Right cardiac atrium (tissue), 5 donors: ENCODE measurements at regions of chr4 and their contacts with region 1.

Region 1: GRCh38 chr4:73776321-73776729 is 36.0 kb downstream of the CXCL8 start:
- DNase-seq: peak in 2 of 3 donors; percentile 19 to 49
- ATAC-seq: peak; percentile 85
- H3K4me3 ChIP-seq: no peak overlapping the region
- H3K27ac ChIP-seq: no peak overlapping the region
- H3K4me1 ChIP-seq: no peaks in the 10 kb centered on the region
- H3K27me3 ChIP-seq: no peaks in the 10 kb centered on the region

Region 2: DNA sequence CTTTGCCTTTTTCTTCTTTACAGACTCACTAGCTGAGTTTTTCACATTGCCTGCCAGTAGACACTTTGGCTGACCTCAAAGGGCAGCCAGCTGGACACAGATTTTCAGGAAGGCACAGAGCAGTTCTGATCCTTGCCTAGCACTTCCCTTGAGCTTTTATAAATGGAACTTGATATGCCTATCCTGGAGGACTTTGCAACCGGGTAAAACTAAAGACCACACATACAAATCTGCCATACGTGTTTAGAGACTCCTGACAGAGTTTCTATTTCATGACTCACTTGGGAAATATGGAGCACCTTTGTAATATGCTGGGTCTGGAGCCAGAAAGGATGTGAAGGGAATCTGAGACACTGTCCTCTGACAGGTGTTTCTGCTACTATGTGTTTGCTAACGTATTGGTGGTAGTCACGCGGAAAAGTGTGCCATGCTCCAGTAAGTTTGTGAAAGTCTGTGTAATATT is 99.4 kb before region 1 on chr4:
- intact Hi-C with region 1: loop called in 1 of 4 experiments (anchors 10 kb)
- DNase-seq: peak; percentile 49 to 74 (median 65)
- ATAC-seq: peak; percentile 23 to 40
- H3K4me3 ChIP-seq: no peak overlapping the region
- H3K27ac ChIP-seq: no peak overlapping the region
- H3K4me1 ChIP-seq: no peaks in the 10 kb centered on the region
- H3K27me3 ChIP-seq: no peaks in the 10 kb centered on the region